MCF 10A (cell line): ENCODE measurements at regions of chr7 and their contacts with region 1.

Region 1: GRCh38 chr7:134316539-134317344 is at the start of gene SLC35B4:
- DNase-seq: peak; percentile 97
- H3K4me3 Mint-ChIP-seq: peak within 1 kb of the TSS; percentile 89
- H3K27ac Mint-ChIP-seq: peak within 1 kb of the TSS; percentile 28
- H3K4me1 Mint-ChIP-seq: peaks cover 12% of the 10 kb centered on the region
- H3K27me3 Mint-ChIP-seq: no peaks in the 10 kb centered on the region
- CTCF ChIP-seq: no peak
- total RNA-seq, gene SLC35B4: 18.6 and 24.5 TPM in 2 replicates

Region 2: GRCh38 chr7:134364619-134365037 is 47.9 kb after region 1 on chr7:
- CTCF ChIA-PET with region 1: interaction called, 3 read pairs
- POLR2A ChIA-PET with region 1: interaction called, 12 read pairs
- intact Hi-C with region 1: loop called (anchors 2 kb)
- DNase-seq: peak; percentile 92
- H3K4me3 Mint-ChIP-seq: no peak overlapping the region
- H3K27ac Mint-ChIP-seq: peak overlapping the region; percentile 88
- H3K4me1 Mint-ChIP-seq: peaks cover 54% of the 10 kb centered on the region
- H3K27me3 Mint-ChIP-seq: no peaks in the 10 kb centered on the region
- CTCF ChIP-seq: no peak